Left ventricle myocardium inferior (tissue), 1 donor: ENCODE measurements at regions of chr13 and their contacts with region 1.

Region 1: GRCh38 chr13:78137404-78138142 is 218.9 kb upstream of the EDNRB start:
- DNase-seq: no peak
- H3K4me3 ChIP-seq: no peak overlapping the region
- H3K27ac ChIP-seq: no peak overlapping the region
- H3K4me1 ChIP-seq: no peaks in the 10 kb centered on the region
- H3K27me3 ChIP-seq: no peaks in the 10 kb centered on the region
- CTCF ChIP-seq: peak; percentile 77

Region 2: DNA sequence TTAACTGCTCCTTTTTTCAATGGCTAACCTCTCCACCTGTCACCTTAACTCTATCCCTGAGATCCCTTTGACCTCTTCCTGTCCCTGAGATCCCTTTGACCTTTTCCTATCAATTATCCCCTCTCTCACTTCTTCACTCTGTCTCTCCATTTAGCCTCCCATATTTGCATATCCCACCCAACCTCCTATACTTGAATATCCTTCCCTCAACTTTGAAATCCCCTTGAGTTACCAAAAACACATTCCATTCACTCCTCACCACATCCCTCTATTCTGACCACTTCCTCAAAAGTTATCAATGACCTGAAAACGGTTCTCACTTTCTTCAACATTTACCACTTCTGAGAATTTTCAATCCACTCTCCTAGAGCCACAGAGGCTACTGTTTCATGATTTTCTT is 813.7 kb before region 1 on chr13:
- intact Hi-C with region 1: no loop called
- DNase-seq: no peak
- H3K4me3 ChIP-seq: no peak overlapping the region
- H3K27ac ChIP-seq: no peak overlapping the region
- H3K4me1 ChIP-seq: peaks cover 95% of the 10 kb centered on the region
- H3K27me3 ChIP-seq: no peaks in the 10 kb centered on the region
- CTCF ChIP-seq: no peak

Region 3: DNA sequence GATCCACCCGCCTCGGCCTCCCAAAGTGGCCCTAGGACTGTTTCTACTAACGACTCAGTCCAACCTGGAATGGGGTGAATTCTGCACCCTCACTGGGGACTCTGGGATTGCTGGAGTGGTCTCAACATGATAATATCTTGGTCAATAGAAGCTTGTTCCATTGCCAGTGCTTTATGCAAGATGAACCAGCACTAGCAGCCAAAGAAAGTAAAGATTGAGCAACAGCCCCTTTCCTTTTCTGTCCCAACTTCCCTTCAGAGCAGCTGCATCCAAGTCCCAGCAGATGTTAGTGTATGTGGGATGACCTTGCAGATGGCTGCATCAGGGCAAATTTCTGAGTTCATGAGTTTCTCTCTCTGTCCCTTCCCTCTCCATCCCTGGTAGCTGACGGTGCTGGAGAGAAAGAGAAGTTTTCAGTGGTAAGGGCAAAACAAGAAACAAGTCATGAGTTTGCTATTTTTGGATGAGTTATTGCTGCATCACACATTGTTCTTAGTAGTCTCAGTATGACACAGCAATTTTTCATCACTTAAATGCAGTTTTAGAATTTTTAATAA is 35.4 kb before region 1 on chr13:
- intact Hi-C with region 1: no loop called
- DNase-seq: peak; percentile 29
- H3K4me3 ChIP-seq: no peak overlapping the region
- H3K27ac ChIP-seq: peak overlapping the region; percentile 37
- H3K4me1 ChIP-seq: no peaks in the 10 kb centered on the region
- H3K27me3 ChIP-seq: no peaks in the 10 kb centered on the region
- CTCF ChIP-seq: no peak

Region 4: GRCh38 chr13:78194904-78195639 is 57.5 kb after region 1 on chr13:
- intact Hi-C with region 1: no loop called
- DNase-seq: no peak
- H3K4me3 ChIP-seq: no peak overlapping the region
- H3K27ac ChIP-seq: no peak overlapping the region
- H3K4me1 ChIP-seq: no peaks in the 10 kb centered on the region
- H3K27me3 ChIP-seq: peaks cover 3% of the 10 kb centered on the region
- CTCF ChIP-seq: no peak

Region 5: DNA sequence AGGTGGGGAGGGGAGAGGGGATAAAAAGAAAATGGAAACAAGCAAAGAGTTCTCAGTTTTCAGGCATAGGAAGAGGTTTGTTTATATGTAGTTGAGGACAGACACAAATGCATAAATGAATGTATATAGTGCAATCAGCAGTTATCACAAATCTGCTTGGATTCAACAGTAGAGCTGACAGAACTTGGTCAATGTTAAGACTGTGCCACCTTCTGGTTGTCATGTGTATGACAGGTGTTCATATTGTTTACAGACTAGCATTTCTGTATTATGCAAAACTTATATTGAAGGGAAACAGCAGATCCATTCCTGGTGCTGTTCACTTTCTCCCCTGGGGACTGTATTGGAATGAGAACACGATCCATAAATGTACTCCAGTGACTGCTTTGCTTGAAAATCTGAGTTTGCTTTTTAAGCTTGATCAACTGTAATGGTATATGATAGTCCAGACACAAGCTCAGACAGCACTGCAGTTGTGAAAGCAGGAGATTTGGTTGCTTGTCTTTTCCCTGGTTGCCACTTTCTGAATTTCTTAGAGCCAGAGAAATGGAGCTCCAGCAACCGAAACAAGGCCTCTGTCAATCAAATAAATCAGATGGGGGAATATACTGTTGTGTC is 840.9 kb after region 1 on chr13:
- intact Hi-C with region 1: loop called (anchors 1 kb)
- DNase-seq: no peak
- H3K4me3 ChIP-seq: no peak overlapping the region
- H3K27ac ChIP-seq: no peak overlapping the region
- H3K4me1 ChIP-seq: no peaks in the 10 kb centered on the region
- H3K27me3 ChIP-seq: peaks cover 22% of the 10 kb centered on the region
- CTCF ChIP-seq: peak; percentile 77